HEK293T (cell line): ENCODE measurements at regions of chr19 and their contacts with region 1.

Region 1: DNA sequence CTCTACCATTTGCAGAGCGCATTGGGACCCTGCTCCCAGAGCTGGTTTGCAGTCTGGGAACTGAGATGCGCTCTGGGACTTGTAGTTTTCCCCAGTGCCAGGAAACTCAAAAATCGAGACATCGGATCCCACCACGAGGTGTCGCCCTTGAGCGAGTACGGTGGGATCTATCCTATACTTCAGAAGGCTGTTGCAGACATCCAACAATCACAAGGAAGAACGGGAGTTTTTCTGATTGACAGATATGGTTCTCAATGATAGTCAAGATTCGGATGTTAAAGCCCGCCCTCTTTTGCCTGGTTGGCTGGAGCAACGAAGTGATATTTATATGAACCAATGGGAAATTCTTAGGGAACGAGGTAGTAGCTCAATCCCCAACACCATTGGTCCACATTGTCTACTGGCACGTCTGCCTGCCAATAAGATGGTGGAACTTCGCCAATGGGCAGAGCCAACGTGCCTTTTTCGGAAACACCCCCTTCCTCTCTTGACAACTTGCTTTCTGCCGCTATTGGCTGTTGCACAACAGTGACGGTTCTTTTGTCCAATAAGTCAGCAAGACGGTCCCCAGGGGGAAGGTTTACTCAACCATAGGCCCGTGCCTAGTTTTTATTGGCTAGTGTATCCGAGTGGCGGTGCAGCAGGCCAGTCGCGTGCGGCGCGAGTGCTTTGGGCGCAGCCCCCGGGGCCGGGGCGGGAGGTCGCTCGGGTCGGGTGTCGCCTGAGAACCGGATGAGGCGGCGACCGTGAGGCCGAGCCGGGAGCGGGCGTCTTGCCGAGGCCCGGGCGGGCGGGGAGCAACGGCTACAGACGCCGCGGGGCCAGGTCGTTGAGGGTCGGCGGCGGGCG is at the start of gene DNM2:
- DNase-seq: peak; percentile 91

Region 2: DNA sequence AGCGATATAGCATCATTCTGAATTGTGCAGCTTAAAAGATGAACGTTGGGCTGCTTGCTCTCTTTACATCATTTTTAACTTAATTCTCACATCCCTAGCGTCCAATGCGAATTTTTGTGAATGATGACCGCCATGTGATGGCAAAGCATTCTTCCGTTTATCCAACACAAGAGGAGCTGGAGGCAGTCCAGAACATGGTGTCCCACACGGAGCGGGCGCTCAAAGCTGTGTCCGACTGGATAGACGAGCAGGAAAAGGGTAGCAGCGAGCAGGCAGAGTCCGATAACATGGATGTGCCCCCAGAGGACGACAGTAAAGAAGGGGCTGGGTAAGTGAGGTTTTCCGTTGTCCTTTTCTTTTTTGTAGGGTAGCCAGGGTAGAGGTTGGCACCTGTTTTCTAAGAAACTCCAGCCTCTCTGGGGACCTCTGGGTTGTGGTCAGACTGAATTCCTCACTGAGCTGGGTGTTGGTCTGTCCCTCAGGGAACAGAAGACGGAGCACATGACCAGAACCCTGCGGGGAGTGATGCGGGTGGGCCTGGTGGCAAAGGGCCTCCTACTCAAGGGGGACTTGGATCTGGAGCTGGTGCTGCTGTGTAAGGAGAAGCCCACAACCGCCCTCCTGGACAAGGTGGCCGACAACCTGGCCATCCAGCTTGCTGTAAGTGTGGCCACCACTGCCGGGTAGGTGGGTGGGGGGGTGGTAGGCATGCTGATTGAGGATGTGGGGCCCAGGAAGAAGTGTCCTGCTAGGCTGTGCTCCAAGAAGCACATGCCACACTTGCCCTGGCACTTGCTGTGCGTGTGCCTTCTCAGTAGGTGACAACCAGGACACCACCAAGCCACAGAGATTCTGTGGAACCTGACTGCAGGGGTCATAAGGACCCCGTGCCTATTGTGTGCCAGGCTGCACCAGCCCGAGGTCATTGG is 46.4 kb before region 1 on chr19:
- CTCF ChIA-PET with region 1: no interaction called
- POLR2A ChIA-PET with region 1: no interaction called
- DNase-seq: no peak

Region 3: DNA sequence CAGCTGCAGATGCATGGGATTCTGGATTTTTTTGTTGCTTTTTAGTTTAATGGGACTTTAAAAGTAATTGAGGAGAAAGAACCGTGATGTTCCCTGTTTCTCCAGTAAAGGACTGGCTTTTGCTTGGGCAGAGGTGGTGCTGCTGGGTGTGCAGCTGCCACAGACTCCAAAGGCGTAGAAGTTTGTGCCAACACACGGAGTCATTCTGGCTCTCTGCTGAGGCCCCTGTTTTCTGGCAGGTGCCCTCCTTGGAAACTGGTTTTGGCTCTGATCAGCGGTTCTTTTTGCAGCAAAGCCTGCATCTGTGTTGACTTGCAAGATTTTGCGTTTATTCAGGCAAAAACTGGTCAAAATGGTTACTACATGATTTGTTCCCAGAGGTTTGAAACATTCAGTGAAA is 32.4 kb before region 1 on chr19:
- CTCF ChIA-PET with region 1: no interaction called
- POLR2A ChIA-PET with region 1: no interaction called
- DNase-seq: no peak

Region 4: DNA sequence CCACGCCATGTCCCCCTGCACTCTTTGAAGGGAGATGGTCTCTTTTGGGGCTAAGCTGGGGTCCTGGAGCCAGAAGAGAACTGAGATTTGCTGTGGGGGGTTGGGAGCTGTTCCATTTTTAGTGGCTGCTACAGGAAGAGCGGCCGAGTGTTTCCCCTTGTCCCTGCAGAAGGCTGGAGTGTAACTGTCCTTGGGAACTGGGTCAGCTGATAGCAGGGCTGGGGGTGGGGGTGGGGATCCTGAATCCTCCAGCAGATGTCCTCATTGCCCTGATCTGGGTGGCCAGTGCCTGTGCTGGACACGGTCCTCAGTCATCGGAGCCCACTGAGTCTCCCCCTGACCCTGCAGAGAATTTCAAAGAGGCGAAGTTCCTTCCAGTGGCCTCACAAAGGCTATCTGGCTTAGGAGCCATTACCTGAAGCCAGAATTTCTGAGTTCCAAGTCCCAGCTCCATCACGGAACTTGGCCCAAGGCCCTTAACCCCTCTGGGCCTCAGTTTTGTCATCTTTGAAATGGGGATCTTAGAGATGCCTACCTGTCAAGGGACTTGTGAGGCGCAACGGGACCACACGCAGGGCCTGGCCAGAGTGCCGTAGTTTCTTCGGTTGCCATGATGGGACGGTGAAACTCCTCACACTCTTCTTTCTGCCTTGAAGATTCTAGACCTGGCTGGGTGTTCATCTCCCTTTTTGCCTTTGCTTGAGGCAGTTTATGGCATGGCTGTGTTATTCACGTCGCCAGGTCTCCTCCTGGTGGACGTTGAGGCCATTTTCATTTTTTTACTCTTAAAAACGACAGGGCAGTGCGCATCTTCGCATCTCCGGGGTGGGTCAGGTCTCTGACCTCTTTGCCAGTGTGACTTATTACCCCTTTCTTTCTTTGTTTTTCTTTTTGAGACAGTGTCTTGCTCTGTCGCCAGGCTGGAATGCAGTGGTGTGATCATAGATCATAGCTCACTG is 52.2 kb after region 1 on chr19:
- CTCF ChIA-PET with region 1: interaction called, 3 read pairs
- POLR2A ChIA-PET with region 1: interaction called, 10 read pairs
- DNase-seq: no peak

Region 5: DNA sequence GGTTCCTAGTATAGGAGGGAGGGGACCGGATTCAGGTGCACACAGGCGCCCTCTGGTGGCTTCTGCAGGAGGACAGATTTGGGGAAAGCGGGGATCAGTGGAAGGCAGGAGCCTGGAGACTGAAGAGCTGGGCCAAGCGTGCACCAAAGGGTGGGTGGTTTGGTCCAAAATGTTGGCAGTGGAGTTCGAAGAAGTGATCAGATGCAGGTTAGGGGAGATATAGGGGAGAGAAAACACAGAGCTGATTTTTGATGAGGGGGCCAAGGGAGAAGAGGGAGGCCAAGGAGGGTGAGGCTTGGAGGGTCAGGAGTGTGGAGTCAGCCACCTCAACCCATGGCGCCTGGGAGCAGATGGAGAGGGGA is 146.9 kb after region 1 on chr19:
- CTCF ChIA-PET with region 1: interaction called, 16 read pairs
- POLR2A ChIA-PET with region 1: interaction called, 7 read pairs
- DNase-seq: peak; percentile 81